ENCODE measurements at regions of chr5 and their contacts with region 1.

Region 1: GRCh38 chr5:31329715-31330114 is 136.2 kb downstream of the CDH6 start:
- DNase-seq: no peak
- H3K4me3 ChIP-seq: no peak overlapping the region
- H3K27ac ChIP-seq: no peak overlapping the region
- H3K4me1 ChIP-seq: no peaks in the 10 kb centered on the region
- H3K27me3 ChIP-seq: no peaks in the 10 kb centered on the region
- CTCF ChIP-seq: peak in 1 of 2 donors; percentile 24

Region 2: GRCh38 chr5:31133488-31133887 is 196.2 kb before region 1 on chr5:
- CTCF ChIA-PET with region 1: no interaction called
- dilution Hi-C with region 1: no loop called
- in situ Hi-C with region 1: no loop called
- intact Hi-C with region 1: no loop called
- DNase-seq: no peak
- H3K4me3 ChIP-seq: no peak overlapping the region
- H3K27ac ChIP-seq: no peak overlapping the region
- H3K4me1 ChIP-seq: no peaks in the 10 kb centered on the region
- H3K27me3 ChIP-seq: no peaks in the 10 kb centered on the region
- CTCF ChIP-seq: no peak

Region 3: GRCh38 chr5:31346896-31347551 is 17.3 kb after region 1 on chr5:
- CTCF ChIA-PET with region 1: no interaction called
- dilution Hi-C with region 1: no loop called
- in situ Hi-C with region 1: no loop called
- intact Hi-C with region 1: loop called (anchors 1 kb)
- DNase-seq: peak; percentile 23
- H3K4me3 ChIP-seq: no peak overlapping the region
- H3K27ac ChIP-seq: no peak overlapping the region
- H3K4me1 ChIP-seq: peaks cover 9% of the 10 kb centered on the region
- H3K27me3 ChIP-seq: peaks cover under 1% of the 10 kb centered on the region
- CTCF ChIP-seq: no peak

Region 4: DNA sequence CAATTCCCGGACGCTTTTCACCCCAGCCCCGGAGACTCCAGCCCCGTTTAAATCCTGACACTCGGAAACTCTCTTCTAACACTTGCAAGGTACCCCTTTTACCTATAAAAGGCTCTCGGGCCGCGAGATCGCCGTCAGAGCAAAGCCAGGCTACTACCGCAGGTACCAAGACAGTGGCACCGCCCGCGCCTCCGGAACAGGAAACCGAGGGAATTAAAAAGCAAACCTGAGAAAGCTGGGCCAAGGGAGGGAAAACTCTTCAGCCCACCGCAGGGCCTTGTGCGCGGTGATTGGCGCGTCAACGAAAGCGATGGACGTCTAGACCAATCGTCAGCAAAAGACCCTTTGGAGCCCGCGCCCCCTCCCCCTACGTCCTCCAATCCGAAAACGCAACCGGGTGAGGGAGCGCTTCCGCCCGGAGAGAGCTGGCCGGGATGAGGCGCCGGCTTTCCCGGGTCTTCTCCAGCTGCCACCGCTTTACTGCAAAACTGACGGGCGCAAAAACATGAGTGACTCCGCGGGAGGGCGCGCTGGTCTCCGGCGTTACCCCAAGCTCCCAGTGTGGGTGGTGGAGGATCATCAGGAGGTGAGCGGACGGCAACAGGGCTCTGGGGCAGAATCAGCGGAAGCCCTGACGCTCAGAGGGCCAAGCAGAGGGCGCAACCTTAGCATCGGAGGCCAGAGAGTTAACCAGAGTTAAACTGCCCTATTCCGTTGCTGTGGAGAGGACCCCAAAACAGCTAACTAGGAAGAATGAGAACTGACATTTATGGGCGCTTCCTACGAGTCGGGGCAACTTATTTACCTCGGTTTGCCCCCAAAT is 202.4 kb after region 1 on chr5 and contains the starts of genes C5orf22 and DROSHA:
- CTCF ChIA-PET with region 1: interaction called, 3 read pairs
- dilution Hi-C with region 1: no loop called
- in situ Hi-C with region 1: no loop called
- intact Hi-C with region 1: loop called (anchors 10 kb)
- DNase-seq: peak; percentile 97
- H3K4me3 ChIP-seq: peak within 1 kb of the TSS; percentile 85 to 99 (median 98)
- H3K27ac ChIP-seq: peak within 1 kb of the TSS; percentile 77
- H3K4me1 ChIP-seq: peaks cover 25% of the 10 kb centered on the region
- H3K27me3 ChIP-seq: no peaks in the 10 kb centered on the region
- CTCF ChIP-seq: no peak
- total RNA-seq, gene C5orf22: 23.8 to 34.5 TPM
- total RNA-seq, gene DROSHA: 44.5 to 68.1 TPM

Region 5: GRCh38 chr5:32014096-32014745 is 684.5 kb after region 1 on chr5:
- CTCF ChIA-PET with region 1: no interaction called
- dilution Hi-C with region 1: no loop called
- in situ Hi-C with region 1: no loop called
- intact Hi-C with region 1: no loop called
- DNase-seq: no peak
- H3K4me3 ChIP-seq: no peak overlapping the region
- H3K27ac ChIP-seq: no peak overlapping the region
- H3K4me1 ChIP-seq: no peaks in the 10 kb centered on the region
- H3K27me3 ChIP-seq: peaks cover 4% of the 10 kb centered on the region
- CTCF ChIP-seq: no peak